A549 (cell line): ENCODE measurements at regions of chr5 and their contacts with region 1.

Region 1: GRCh38 chr5:141960449-141961202 is 2.6 kb upstream of the PCDH12 start:
- DNase-seq: peak; percentile 79 to 92
- ATAC-seq: peak; percentile 88 to 97
- H3K4me3 ChIP-seq: no peak overlapping the region
- H3K27ac ChIP-seq: peak overlapping the region; percentile 15 to 67; a peak in 5 of 6 replicates
- H3K4me1 ChIP-seq: 0 out of 3 replicates have a peak, but pooled peaks cover 4% of the 10 kb centered on the region
- CTCF ChIP-seq: peak; percentile 94
- EP300 ChIP-seq: no peak
- POLR2A ChIP-seq: no peak
- RAD21 ChIP-seq: peak; percentile 81 to 88

Region 2: DNA sequence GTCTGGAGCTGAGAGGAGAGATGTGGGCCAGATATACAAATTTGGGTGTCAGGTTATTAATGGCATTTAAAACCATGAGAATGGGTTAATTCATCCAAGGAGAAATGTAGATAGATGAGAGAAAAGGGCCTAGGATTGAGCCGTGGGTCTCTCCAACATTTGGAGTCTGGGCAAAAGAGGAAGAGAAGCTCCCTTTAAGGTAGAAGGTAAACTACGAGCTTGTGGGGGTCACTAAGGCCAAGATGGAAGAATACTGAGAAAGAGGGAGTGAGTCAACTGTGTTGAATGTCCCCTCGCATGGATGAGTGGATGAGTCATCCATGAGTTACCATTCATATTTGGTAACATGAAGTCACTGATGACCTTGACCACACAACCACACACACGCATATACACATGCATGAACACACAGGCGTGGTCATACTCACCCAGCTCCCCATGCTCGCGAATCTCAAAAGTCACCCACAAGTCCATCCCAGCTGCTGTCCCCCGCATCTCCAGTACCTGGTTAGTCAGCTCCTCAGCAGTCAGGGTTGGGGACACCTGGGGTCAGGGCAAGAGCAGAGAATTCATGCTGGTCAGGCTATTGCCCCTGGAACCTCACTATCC is 302.6 kb before region 1 on chr5:
- CTCF ChIA-PET with region 1: interaction called, 11 read pairs
- POLR2A ChIA-PET with region 1: no interaction called
- DNase-seq: peak; percentile 63 to 70
- ATAC-seq: peak; percentile 32 to 44; a peak in 3 of 6 replicates
- H3K4me3 ChIP-seq: no peak overlapping the region
- H3K27ac ChIP-seq: no peak overlapping the region
- H3K4me1 ChIP-seq: peaks cover 9% of the 10 kb centered on the region
- CTCF ChIP-seq: no peak
- EP300 ChIP-seq: no peak
- POLR2A ChIP-seq: no peak
- RAD21 ChIP-seq: no peak

Region 3: GRCh38 chr5:141681695-141682641 is 278.7 kb before region 1 on chr5 and contains the start of gene ARAP3:
- CTCF ChIA-PET with region 1: interaction called, 24 read pairs
- POLR2A ChIA-PET with region 1: no interaction called
- DNase-seq: peak; percentile 69 to 75
- ATAC-seq: peak; percentile 87 to 93
- H3K4me3 ChIP-seq: peak within 1 kb of the TSS; percentile 49
- H3K27ac ChIP-seq: peak within 1 kb of the TSS; percentile 88 to 98
- H3K4me1 ChIP-seq: peaks cover 24% of the 10 kb centered on the region
- CTCF ChIP-seq: no peak
- EP300 ChIP-seq: no peak
- POLR2A ChIP-seq: peak; percentile 40
- RAD21 ChIP-seq: no peak
- polyA plus RNA-seq, gene ARAP3: 3.0 and 4.5 TPM in 2 replicates

Region 4: DNA sequence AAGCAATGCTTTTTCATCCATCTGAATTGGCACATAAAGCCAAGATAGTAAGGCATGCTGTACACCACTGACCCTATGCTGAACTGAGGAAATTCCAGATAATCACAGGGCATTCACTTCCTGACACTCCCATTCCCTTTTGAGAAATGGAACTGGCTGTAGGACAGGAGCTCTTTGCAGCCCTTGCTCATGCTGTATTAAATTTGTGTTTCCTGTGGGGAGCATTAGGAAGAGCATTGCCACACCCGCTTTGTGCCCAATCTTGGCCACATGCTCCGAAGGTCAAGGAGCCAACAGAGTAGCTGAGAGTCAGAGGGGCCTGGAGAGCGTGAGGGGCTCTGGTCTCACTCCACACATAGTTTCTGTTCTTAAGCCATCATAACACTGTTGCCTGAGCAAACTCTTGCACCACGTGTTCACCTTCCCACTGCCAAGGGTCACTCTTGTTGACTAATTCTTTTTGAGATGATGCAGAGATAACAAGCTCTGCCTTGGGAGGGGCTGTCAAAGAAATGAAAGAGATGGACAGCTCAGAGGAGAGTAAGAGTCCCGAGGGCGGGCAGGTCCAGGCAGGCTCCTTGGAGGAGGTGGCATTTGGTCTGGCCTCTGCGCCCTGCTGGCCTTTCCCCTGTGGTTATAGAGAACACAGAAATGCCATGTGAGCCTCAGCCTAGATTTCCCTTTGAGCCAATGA is 246.9 kb before region 1 on chr5:
- CTCF ChIA-PET with region 1: interaction called, 18 read pairs
- POLR2A ChIA-PET with region 1: no interaction called
- DNase-seq: peak in 1 of 2 experiments; percentile 60
- ATAC-seq: peak; percentile 40 to 68; a peak in 5 of 6 replicates
- H3K4me3 ChIP-seq: no peak overlapping the region
- H3K27ac ChIP-seq: peak overlapping the region; percentile 22 to 45; a peak in 4 of 6 replicates
- H3K4me1 ChIP-seq: peaks cover 21% of the 10 kb centered on the region
- CTCF ChIP-seq: no peak
- EP300 ChIP-seq: no peak
- POLR2A ChIP-seq: no peak
- RAD21 ChIP-seq: no peak

Region 5: GRCh38 chr5:141757402-141757801 is 203.2 kb before region 1 on chr5:
- CTCF ChIA-PET with region 1: interaction called, 21 read pairs
- POLR2A ChIA-PET with region 1: no interaction called
- DNase-seq: peak; percentile 54 to 72
- ATAC-seq: peak; percentile 71 to 91
- H3K4me3 ChIP-seq: no peak overlapping the region
- H3K27ac ChIP-seq: no peak overlapping the region
- H3K4me1 ChIP-seq: no peaks in the 10 kb centered on the region
- CTCF ChIP-seq: peak; percentile 35; the same call in 2 of the 3 replicates
- EP300 ChIP-seq: no peak
- POLR2A ChIP-seq: no peak
- RAD21 ChIP-seq: peak; percentile 48 to 63; a peak in 3 of 5 replicates

Region 6: GRCh38 chr5:141914199-141914743 is 46.4 kb before region 1 on chr5:
- CTCF ChIA-PET with region 1: interaction called, 11 read pairs
- POLR2A ChIA-PET with region 1: no interaction called
- DNase-seq: no peak
- ATAC-seq: peak in 1 of 2 experiments; percentile 58; a peak in 3 of 6 replicates
- H3K4me3 ChIP-seq: no peak overlapping the region
- H3K27ac ChIP-seq: no peak overlapping the region
- H3K4me1 ChIP-seq: no peaks in the 10 kb centered on the region
- CTCF ChIP-seq: no peak
- EP300 ChIP-seq: no peak
- POLR2A ChIP-seq: no peak
- RAD21 ChIP-seq: peak in 1 of 2 experiments; percentile 28; a peak in 2 of 5 replicates

Region 7: GRCh38 chr5:141935538-141935937 is 25.1 kb before region 1 on chr5:
- CTCF ChIA-PET with region 1: interaction called, 158 read pairs
- POLR2A ChIA-PET with region 1: no interaction called
- DNase-seq: no peak
- ATAC-seq: no peak; a peak in 1 of 6 replicates
- H3K4me3 ChIP-seq: no peak overlapping the region
- H3K27ac ChIP-seq: no peak overlapping the region
- H3K4me1 ChIP-seq: no peaks in the 10 kb centered on the region; the same call in 2 of the 3 replicates
- CTCF ChIP-seq: no peak
- EP300 ChIP-seq: no peak
- POLR2A ChIP-seq: no peak
- RAD21 ChIP-seq: no peak